Naive thymus-derived CD4-positive, alpha-beta T cell (primary cell): ENCODE measurements at regions of chr1 and their contacts with region 1.

Region 1: DNA sequence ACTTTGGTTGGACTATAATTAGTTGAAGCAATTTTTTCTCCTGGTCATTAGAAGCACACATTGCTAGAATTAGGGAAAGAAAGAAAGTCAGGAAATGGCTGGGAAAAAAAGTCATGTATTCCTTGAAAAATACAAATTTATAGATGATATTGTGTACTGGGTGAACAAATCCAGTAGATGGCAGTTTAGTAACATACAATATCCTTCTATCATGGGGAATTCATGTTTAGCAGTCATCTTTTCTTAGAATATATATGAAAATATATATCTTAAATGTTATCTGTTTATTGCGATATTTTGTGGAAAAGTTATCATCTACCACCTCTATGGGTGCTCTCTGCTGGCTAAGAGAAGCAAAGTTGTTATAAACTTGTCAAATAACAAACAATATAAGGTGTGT is 13.1 kb upstream of the ZRANB2 start:
- DNase-seq: no peak
- ATAC-seq: no peak
- H3K4me3 ChIP-seq: no peak overlapping the region
- H3K4me3 Mint-ChIP-seq: no peak overlapping the region
- H3K27ac ChIP-seq: no peak overlapping the region
- H3K27ac Mint-ChIP-seq: no peak overlapping the region
- H3K4me1 ChIP-seq: no peaks in the 10 kb centered on the region
- H3K4me1 Mint-ChIP-seq: no peaks in the 10 kb centered on the region
- H3K27me3 ChIP-seq: peaks cover 0 to 6% of the 10 kb centered on the region in 2 donors
- H3K27me3 Mint-ChIP-seq: peaks cover under 1 to 10% (median 7%) of the 10 kb centered on the region in 5 donors

Region 2: GRCh38 chr1:71521655-71522264 is 427.8 kb after region 1 on chr1:
- CTCF ChIA-PET with region 1: no interaction called
- POLR2A ChIA-PET with region 1: no interaction called
- intact Hi-C with region 1: loop called in 1 of 2 experiments (anchors 2 kb)
- DNase-seq: no peak
- ATAC-seq: no peak
- H3K4me3 ChIP-seq: no peak overlapping the region
- H3K4me3 Mint-ChIP-seq: no peak overlapping the region
- H3K27ac ChIP-seq: no peak overlapping the region
- H3K27ac Mint-ChIP-seq: no peak overlapping the region
- H3K4me1 ChIP-seq: no peaks in the 10 kb centered on the region
- H3K4me1 Mint-ChIP-seq: peaks cover 0 to 2% (median 0%) of the 10 kb centered on the region in 7 donors
- H3K27me3 ChIP-seq: no peaks in the 10 kb centered on the region
- H3K27me3 Mint-ChIP-seq: no peaks in the 10 kb centered on the region

Region 3: DNA sequence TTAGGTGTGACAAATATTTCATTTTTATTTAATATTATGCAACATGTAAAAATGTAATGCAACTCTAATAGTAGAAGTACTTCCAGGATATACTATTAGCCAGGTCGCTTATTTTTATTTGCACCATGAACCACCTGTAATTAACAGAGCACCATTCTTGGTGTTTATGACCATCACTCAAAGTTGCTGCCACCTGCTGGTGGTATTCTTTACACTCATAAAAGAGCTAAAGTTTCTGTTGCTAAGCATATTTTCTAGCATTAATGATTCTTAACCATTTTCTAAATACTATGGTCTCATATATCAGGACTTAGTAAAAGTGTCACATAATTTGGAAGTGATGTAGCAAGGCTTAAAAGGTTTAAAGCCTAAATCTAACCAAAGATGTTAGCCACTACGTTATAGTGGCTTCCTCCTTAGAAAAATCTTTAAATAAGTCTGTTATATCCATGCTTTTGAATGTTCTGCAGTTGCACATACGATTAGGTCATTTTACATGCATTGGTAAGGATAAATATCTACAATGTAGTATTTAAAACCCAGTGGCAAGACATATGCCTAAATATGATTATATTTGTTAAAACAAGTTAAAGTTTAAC is 943.9 kb after region 1 on chr1:
- CTCF ChIA-PET with region 1: no interaction called
- POLR2A ChIA-PET with region 1: no interaction called
- intact Hi-C with region 1: loop called in 1 of 2 experiments (anchors 5 kb)
- DNase-seq: no peak
- ATAC-seq: no peak
- H3K4me3 ChIP-seq: no peak overlapping the region
- H3K4me3 Mint-ChIP-seq: no peak overlapping the region
- H3K27ac ChIP-seq: no peak overlapping the region
- H3K27ac Mint-ChIP-seq: no peak overlapping the region
- H3K4me1 ChIP-seq: no peaks in the 10 kb centered on the region
- H3K4me1 Mint-ChIP-seq: no peaks in the 10 kb centered on the region
- H3K27me3 ChIP-seq: no peaks in the 10 kb centered on the region
- H3K27me3 Mint-ChIP-seq: no peaks in the 10 kb centered on the region